Naive thymus-derived CD8-positive, alpha-beta T cell (primary cell): ENCODE measurements at regions of chr1 and their contacts with region 1.

Region 1: GRCh38 chr1:116139592-116140134 is 28.5 kb downstream of the MAB21L3 start:
- DNase-seq: no peak
- ATAC-seq: no peak
- H3K4me3 Mint-ChIP-seq: no peak overlapping the region
- H3K27ac Mint-ChIP-seq: no peak overlapping the region
- H3K4me1 Mint-ChIP-seq: peaks cover 0 to 7% (median 3%) of the 10 kb centered on the region in 4 donors
- H3K27me3 Mint-ChIP-seq: peaks cover 0 to 7% (median 3%) of the 10 kb centered on the region in 5 donors

Region 2: GRCh38 chr1:116151739-116152576 is 12.3 kb after region 1 on chr1:
- POLR2A ChIA-PET with region 1: interaction called, 15 read pairs
- DNase-seq: peak; percentile 70 to 82 (median 76)
- ATAC-seq: peak; percentile 90 to 95
- H3K4me3 Mint-ChIP-seq: peak overlapping the region; percentile 75 to 89 (median 85)
- H3K27ac Mint-ChIP-seq: peak overlapping the region; percentile 85 to 97 (median 94)
- H3K4me1 Mint-ChIP-seq: peaks cover 21 to 36% (median 30%) of the 10 kb centered on the region in 4 donors
- H3K27me3 Mint-ChIP-seq: no peaks in the 10 kb centered on the region

Region 3: DNA sequence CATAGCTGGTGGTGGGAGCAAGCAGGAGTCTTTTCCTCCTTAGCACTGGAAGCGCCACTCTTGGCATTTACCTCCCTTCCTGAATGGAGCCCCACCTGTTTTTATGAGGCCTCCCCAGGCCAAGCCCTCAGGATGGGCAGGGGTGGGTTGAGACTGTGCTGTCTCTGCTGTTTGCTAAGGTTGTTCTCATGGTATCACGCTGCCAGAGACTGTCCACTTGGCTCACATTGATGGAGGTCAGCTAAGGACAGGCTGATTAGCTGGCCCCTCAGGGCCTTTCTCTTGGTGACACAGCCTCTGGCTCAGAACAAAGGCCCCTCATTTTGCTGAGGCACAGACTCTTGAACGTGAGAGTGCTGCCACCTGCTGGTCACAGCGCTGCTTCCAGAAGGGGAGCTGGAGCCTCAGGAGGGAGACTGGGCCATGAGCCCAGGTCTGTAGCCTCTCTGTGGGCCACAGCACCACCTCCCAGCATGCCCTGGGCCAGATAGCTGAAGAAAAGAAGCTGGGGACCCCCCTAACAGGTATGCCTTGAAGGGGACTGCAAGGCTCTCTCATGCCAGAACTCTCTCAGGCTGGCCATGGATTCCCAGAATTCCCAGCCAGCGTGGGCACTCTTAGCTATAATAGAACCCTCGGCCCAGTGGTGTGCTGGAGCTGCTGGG is 345.5 kb after region 1 on chr1:
- POLR2A ChIA-PET with region 1: interaction called, 35 read pairs
- DNase-seq: peak; percentile 72 to 92 (median 84)
- ATAC-seq: peak; percentile 98 to 99
- H3K4me3 Mint-ChIP-seq: no peak overlapping the region
- H3K27ac Mint-ChIP-seq: no peak overlapping the region
- H3K4me1 Mint-ChIP-seq: peaks cover 0 to 1% (median 0%) of the 10 kb centered on the region in 4 donors
- H3K27me3 Mint-ChIP-seq: no peaks in the 10 kb centered on the region

Region 4: DNA sequence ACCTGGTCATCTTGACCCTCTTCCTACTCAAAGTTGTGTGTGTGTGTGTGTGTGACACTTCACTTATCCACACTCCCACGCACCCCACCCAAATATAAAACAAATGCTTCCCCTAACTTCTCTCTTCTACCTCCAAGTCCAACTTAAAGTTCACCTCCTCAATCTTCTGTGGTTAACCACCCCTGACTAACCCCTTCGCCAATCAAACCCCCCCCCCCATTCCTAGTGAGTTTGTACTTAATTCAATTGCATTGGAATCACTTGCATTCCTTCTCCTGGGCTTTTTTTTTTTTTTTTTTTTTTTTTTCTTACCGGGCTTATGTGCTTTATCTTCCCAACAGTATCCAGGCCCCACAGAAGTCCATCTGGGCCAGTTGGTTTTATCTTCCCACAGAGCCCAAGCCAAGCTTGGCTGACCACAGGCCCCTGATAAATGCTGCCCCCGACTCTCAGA is 352.7 kb after region 1 on chr1:
- POLR2A ChIA-PET with region 1: interaction called, 35 read pairs
- DNase-seq: no peak
- ATAC-seq: no peak
- H3K4me3 Mint-ChIP-seq: no peak overlapping the region
- H3K27ac Mint-ChIP-seq: no peak overlapping the region
- H3K4me1 Mint-ChIP-seq: peaks cover 0 to 18% (median 6%) of the 10 kb centered on the region in 4 donors
- H3K27me3 Mint-ChIP-seq: no peaks in the 10 kb centered on the region

Region 5: DNA sequence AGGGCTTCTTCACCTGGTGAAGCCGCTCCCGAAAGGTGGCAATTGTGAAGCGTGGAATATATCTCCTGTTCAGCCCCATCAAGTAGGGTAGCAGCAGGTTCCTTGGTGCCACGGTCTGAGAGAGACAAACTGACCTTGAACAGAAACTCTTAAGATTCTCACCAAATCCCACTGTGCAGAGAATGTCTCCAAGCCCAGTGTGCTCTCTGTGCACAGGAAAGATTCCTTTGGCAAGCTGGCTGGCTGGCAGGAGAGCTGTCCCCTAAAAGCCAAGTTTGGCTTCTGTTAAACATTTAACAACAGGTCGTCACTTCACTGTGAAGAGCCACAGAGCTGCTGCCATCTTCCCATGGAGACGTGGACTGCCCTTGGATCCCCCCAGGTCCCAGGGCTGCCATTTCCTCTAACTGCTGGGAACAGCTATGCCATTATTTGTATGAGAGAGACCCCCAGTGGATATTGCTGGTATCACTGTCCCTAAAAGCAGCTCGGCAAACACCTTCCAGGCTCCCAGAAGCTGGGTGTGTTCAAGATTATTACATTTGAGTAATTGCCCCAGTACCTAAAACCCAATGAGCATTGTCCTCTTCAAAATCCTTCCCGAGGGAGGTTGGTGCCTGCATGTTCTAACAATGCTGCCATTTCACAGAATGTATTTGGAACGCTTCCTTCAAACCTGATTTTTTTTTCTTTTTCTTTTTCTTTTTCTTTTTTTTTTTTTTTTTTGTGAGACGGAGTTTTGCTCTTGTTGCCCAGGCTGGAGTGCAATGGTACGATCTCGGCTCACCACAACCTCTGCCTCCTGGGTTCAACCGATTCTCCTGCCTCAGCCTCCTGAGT is 359.3 kb after region 1 on chr1:
- POLR2A ChIA-PET with region 1: interaction called, 10 read pairs
- DNase-seq: peak in 7 of 10 donors; percentile 25 to 59 (median 47)
- ATAC-seq: peak; percentile 63 to 78
- H3K4me3 Mint-ChIP-seq: no peak overlapping the region
- H3K27ac Mint-ChIP-seq: peak overlapping the region in 6 of 10 donors; percentile 41 to 77 (median 52)
- H3K4me1 Mint-ChIP-seq: peaks cover 13 to 34% (median 26%) of the 10 kb centered on the region in 4 donors
- H3K27me3 Mint-ChIP-seq: no peaks in the 10 kb centered on the region